ENCODE measurements at regions of chrX and their contacts with region 1.

Region 1: DNA sequence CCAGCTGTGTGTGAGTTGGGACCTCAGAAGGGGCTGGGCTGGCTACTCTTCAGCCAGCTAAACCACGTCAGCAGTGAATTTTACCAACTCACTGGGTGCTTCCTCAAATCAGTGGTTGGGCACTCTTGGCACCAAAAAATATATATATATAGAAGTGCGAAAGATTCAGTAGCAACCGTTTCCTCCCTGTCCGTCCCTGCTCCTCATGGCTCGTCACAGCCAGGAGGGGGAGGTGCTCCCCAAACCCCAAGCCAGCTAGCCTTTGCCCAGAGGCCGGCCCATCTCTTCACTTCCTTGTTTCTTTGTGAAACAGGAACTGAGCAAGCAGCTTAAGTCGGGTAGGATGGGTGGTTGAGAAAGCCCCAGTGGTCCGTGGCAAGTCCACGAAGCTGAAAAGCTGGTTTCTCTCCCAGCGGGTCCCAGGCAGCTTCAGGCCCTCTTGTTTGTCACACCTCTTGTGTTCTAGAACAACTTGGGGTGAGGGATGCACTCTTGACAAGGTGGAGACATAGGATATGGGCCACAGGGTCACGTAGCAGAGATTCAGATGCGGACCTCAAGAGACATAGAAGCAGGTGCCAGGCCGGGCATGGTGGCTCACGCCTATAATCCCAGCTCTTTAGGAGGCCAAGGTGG is 6.8 kb upstream of the SASH3 start:
- DNase-seq: peak; percentile 57
- H3K4me3 Mint-ChIP-seq: no peak overlapping the region
- H3K27ac Mint-ChIP-seq: peak overlapping the region; percentile 93
- H3K4me1 Mint-ChIP-seq: peaks cover 85% of the 10 kb centered on the region
- H3K27me3 Mint-ChIP-seq: no peaks in the 10 kb centered on the region

Region 2: GRCh38 chrX:129653971-129654418 is 118.9 kb before region 1 on chrX:
- CTCF ChIA-PET with region 1: no interaction called
- POLR2A ChIA-PET with region 1: no interaction called
- DNase-seq: no peak
- H3K4me3 Mint-ChIP-seq: peak overlapping the region; percentile 55
- H3K27ac Mint-ChIP-seq: no peak overlapping the region
- H3K4me1 Mint-ChIP-seq: peaks cover 12% of the 10 kb centered on the region
- H3K27me3 Mint-ChIP-seq: peaks cover 21% of the 10 kb centered on the region

Region 3: DNA sequence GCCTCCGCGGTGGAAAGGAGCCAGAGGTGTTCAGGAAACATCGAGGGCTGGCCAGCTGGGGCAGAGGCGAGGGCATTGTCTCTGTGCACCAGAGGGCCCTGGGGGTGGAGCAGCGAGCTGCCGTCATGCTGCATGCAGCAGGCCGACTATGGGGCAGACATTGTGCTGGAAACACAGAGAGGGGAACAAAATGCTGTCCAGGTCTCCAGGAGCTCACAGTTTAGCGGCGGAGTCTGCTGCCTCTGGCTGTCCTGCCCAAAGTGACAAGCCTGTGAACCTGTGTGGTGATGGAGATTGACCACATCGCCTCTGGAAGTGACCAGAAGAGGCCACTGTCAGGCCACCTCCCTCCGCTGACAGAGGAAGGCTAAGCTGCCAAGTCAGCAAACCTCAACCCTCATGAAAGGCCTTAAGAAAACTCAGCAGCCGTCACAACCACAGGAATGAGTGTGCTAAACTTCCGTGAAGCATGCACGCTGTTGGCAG is 13.3 kb before region 1 on chrX:
- CTCF ChIA-PET with region 1: interaction called, 12 read pairs
- POLR2A ChIA-PET with region 1: no interaction called
- DNase-seq: peak; percentile 68
- H3K4me3 Mint-ChIP-seq: peak overlapping the region; percentile 31
- H3K27ac Mint-ChIP-seq: peak overlapping the region; percentile 90
- H3K4me1 Mint-ChIP-seq: peaks cover 72% of the 10 kb centered on the region
- H3K27me3 Mint-ChIP-seq: no peaks in the 10 kb centered on the region

Measured in activated CD4-positive, alpha-beta T cell treated with anti-CD3 and anti-CD28 coated beads, Interleukin-2, amount 10 ng/mL, durations not matched to agents 7 days and 5 days (primary cell).